ENCODE measurements at regions of chr4 and their contacts with region 1.

Region 1: GRCh38 chr4:185729391-185729804 is 82.6 kb downstream of the SORBS2 start:
- DNase-seq: no peak
- H3K4me3 ChIP-seq: no peak overlapping the region
- H3K27ac ChIP-seq: peak overlapping the region in 42 of 59 donors; percentile 3 to 84 (median 62)
- H3K27me3 ChIP-seq: peaks cover 0 to 13% (median 0%) of the 10 kb centered on the region in 45 donors
- CTCF ChIP-seq: no peak

Region 2: DNA sequence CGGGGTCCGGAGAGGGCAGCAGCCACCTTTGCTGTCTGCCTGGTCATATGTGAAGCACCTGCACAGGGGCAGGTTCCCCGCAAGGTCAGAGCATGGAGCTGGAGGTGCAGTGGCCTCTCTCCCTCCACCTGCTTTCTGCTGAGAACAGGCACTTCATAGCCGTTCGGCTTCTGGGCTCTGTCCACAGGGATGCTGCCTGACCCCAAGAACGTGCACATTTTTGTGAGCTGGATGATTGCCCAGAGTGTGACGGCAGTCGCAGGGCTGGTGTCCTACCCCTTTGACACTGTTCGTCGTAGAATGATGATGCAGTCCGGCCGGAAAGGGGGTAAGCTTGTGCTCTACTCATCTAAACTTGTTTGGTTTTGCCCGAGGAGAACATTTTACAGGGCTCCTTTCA is 583.8 kb before region 1 on chr4:
- intact Hi-C with region 1: no loop called
- DNase-seq: peak in 3 of 10 donors; percentile 17 to 43 (median 34)
- H3K4me3 ChIP-seq: peak overlapping the region in 57 of 59 donors; percentile 6 to 96 (median 81)
- H3K27ac ChIP-seq: peak overlapping the region in 54 of 59 donors; percentile 16 to 99 (median 93)
- H3K27me3 ChIP-seq: no peaks in the 10 kb centered on the region
- CTCF ChIP-seq: no peak

Region 3: GRCh38 chr4:185716577-185717376 is 12.6 kb before region 1 on chr4:
- intact Hi-C with region 1: loop called in 1 of 2 experiments (anchors 1 kb)
- DNase-seq: peak in 8 of 10 donors; percentile 53 to 79 (median 66)
- H3K4me3 ChIP-seq: peak overlapping the region in 4 of 59 donors; percentile 3 to 28 (median 8)
- H3K27ac ChIP-seq: peak overlapping the region in 17 of 59 donors; percentile 3 to 61 (median 24)
- H3K27me3 ChIP-seq: peaks cover 0 to 6% (median 0%) of the 10 kb centered on the region in 45 donors
- CTCF ChIP-seq: no peak